ENCODE measurements at regions of chr2 and their contacts with region 1.

Region 1: DNA sequence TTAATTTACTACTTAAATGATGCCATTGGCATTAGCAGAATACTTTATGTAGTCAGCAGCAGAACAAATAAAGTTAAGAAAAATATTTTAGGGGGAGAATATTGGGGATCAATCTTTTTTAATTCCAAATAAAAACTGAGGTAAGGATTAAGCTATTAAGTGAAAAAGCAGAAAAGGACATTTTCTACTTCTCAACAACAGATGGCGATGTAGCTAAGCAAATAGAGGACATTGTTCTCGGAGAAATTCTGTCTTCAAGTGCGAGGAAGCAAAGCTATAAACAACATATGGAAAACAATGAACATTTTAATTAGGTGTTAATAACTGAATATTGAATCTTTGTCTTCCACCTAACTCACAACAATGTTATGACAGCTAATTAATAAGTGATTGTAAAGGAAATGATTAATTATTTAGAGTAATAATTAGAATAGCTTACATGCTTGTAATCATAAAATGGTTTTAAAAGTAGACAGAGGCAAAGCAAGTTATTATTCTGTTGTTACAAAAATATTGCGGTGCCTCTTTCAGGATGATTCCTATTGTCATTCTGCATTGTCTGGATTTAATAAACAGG is 32.9 kb upstream of the CCDC93 start:
- DNase-seq: peak; percentile 71
- ATAC-seq: peak; percentile 9; the same call in 1 of the 2 replicates
- H3K4me3 ChIP-seq: peak overlapping the region; percentile 45
- H3K27ac ChIP-seq: peak overlapping the region; percentile 66
- H3K4me1 ChIP-seq: peaks cover 53% of the 10 kb centered on the region
- H3K27me3 ChIP-seq: no peaks in the 10 kb centered on the region
- CTCF ChIP-seq: peak; percentile 87

Region 2: GRCh38 chr2:117323331-117323730 is 723.4 kb before region 1 on chr2:
- CTCF ChIA-PET with region 1: no interaction called
- POLR2A ChIA-PET with region 1: no interaction called
- intact Hi-C with region 1: no loop called
- DNase-seq: no peak
- ATAC-seq: no peak
- H3K4me3 ChIP-seq: no peak overlapping the region
- H3K27ac ChIP-seq: no peak overlapping the region
- H3K4me1 ChIP-seq: no peaks in the 10 kb centered on the region
- H3K27me3 ChIP-seq: peaks cover 18% of the 10 kb centered on the region
- CTCF ChIP-seq: no peak

Region 3: GRCh38 chr2:117985092-117985491 is 61.6 kb before region 1 on chr2:
- CTCF ChIA-PET with region 1: no interaction called
- POLR2A ChIA-PET with region 1: no interaction called
- intact Hi-C with region 1: no loop called
- DNase-seq: no peak
- ATAC-seq: no peak
- H3K4me3 ChIP-seq: no peak overlapping the region
- H3K27ac ChIP-seq: no peak overlapping the region
- H3K4me1 ChIP-seq: peaks cover 30% of the 10 kb centered on the region
- H3K27me3 ChIP-seq: no peaks in the 10 kb centered on the region
- CTCF ChIP-seq: 0 out of 2 replicates have a peak, but pooled peaks have one; percentile 15

Region 4: DNA sequence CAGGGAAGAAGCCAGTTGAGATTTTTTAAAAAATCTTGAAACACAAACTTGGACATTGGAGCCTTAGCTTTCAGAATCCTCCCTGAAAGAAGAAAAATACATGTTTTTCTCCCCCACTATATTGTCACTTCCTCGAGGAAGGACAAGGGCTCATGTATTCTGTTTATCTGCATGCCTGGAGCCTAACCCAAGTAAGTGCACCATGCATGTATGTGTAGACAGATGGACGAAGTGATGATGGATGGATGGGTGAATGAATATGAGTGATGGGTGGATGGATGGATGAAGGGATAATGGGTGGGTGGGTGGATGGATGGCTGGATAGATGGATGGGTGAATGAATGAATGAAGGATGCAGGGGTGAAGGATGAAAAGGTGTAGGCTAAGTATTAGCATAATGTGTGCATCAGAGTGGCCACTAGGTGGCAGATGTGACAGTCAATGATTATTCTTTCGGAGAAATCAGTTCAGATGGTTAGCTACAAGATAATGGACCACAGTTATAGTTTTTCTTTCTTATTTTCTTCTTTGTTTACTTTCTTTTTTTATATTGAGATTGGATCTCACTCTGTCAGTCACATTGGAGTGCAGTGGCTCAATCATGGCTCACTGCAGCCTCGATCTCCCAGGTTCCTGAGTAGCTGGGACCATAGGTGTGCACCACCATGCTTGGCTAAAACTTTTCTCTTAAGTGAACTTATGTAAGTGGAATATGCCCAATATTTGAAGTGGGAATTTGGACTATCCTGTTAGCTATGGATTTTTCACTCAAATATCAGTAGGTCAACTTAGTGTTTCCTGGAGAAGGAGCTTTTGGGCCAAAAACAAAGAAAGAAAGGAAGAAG is 14.3 kb before region 1 on chr2:
- CTCF ChIA-PET with region 1: interaction called, 19 read pairs
- POLR2A ChIA-PET with region 1: interaction called, 3 read pairs
- intact Hi-C with region 1: no loop called
- DNase-seq: peak; percentile 68
- ATAC-seq: peak; percentile 81
- H3K4me3 ChIP-seq: no peak overlapping the region
- H3K27ac ChIP-seq: no peak overlapping the region
- H3K4me1 ChIP-seq: no peaks in the 10 kb centered on the region
- H3K27me3 ChIP-seq: peaks cover 13% of the 10 kb centered on the region
- CTCF ChIP-seq: peak; percentile 83

Region 5: GRCh38 chr2:118088051-118089024 is 41.6 kb after region 1 on chr2 and contains the start of gene INSIG2:
- CTCF ChIA-PET with region 1: interaction called, 14 read pairs
- POLR2A ChIA-PET with region 1: no interaction called
- intact Hi-C with region 1: loop called (anchors 1 kb)
- DNase-seq: peak; percentile 98
- ATAC-seq: peak; percentile 88
- H3K4me3 ChIP-seq: peak within 1 kb of the TSS; percentile 88
- H3K27ac ChIP-seq: peak within 1 kb of the TSS; percentile 57
- H3K4me1 ChIP-seq: peaks cover 43% of the 10 kb centered on the region
- H3K27me3 ChIP-seq: no peaks in the 10 kb centered on the region
- CTCF ChIP-seq: no peak
- total RNA-seq, gene INSIG2: 7.4 and 8.5 TPM in 2 replicates

Region 6: GRCh38 chr2:118148809-118149208 is 102.1 kb after region 1 on chr2:
- CTCF ChIA-PET with region 1: no interaction called
- POLR2A ChIA-PET with region 1: no interaction called
- intact Hi-C with region 1: loop called (anchors 1 kb)
- DNase-seq: no peak
- ATAC-seq: no peak
- H3K4me3 ChIP-seq: no peak overlapping the region
- H3K27ac ChIP-seq: no peak overlapping the region
- H3K4me1 ChIP-seq: peaks cover 17% of the 10 kb centered on the region
- H3K27me3 ChIP-seq: no peaks in the 10 kb centered on the region
- CTCF ChIP-seq: no peak; the same call in 1 of the 2 replicates

Region 7: GRCh38 chr2:118186110-118186857 is 139.6 kb after region 1 on chr2:
- CTCF ChIA-PET with region 1: interaction called, 3 read pairs
- POLR2A ChIA-PET with region 1: no interaction called
- intact Hi-C with region 1: loop called (anchors 1 kb)
- DNase-seq: peak; percentile 68
- ATAC-seq: peak; percentile 76
- H3K4me3 ChIP-seq: peak overlapping the region; percentile 74
- H3K27ac ChIP-seq: peak overlapping the region; percentile 64
- H3K4me1 ChIP-seq: peaks cover 29% of the 10 kb centered on the region
- H3K27me3 ChIP-seq: no peaks in the 10 kb centered on the region
- CTCF ChIP-seq: no peak

Region 8: GRCh38 chr2:118221666-118222594 is 175.2 kb after region 1 on chr2:
- CTCF ChIA-PET with region 1: interaction called, 7 read pairs
- POLR2A ChIA-PET with region 1: no interaction called
- intact Hi-C with region 1: loop called (anchors 1 kb)
- DNase-seq: peak; percentile 91
- ATAC-seq: peak; percentile 97
- H3K4me3 ChIP-seq: no peak overlapping the region
- H3K27ac ChIP-seq: no peak overlapping the region
- H3K4me1 ChIP-seq: peaks cover 4% of the 10 kb centered on the region; the same call in 1 of the 2 replicates
- H3K27me3 ChIP-seq: no peaks in the 10 kb centered on the region
- CTCF ChIP-seq: peak; percentile 87

Region 9: DNA sequence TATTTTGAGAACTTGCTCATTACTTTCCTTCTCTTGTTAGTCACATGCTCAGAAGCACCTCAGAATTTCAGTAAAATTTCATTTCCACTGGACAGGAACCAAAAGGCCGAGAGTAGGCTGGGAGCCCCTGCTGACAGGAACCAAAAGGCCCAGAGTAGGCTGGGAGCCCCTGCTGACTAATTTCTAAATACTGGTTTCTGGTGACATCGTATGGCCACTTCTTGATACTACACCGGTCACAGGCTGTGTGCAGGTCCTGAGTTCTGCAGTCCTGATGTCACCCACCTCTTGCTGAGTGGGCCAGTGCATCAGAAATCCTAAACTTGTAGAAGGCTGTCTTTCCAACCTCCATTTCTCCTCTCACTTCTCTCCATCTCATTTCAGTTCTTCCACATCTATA is 818.4 kb after region 1 on chr2:
- CTCF ChIA-PET with region 1: interaction called, 3 read pairs
- POLR2A ChIA-PET with region 1: no interaction called
- intact Hi-C with region 1: loop called (anchors 5 kb)
- DNase-seq: peak; percentile 79
- ATAC-seq: peak; percentile 98
- H3K4me3 ChIP-seq: no peak overlapping the region
- H3K27ac ChIP-seq: no peak overlapping the region
- H3K4me1 ChIP-seq: peaks cover 16% of the 10 kb centered on the region
- H3K27me3 ChIP-seq: no peaks in the 10 kb centered on the region
- CTCF ChIP-seq: peak; percentile 84

Measured in PC-3 (cell line).